ENCODE measurements at regions of chr4 and their contacts with region 1.

Region 1: DNA sequence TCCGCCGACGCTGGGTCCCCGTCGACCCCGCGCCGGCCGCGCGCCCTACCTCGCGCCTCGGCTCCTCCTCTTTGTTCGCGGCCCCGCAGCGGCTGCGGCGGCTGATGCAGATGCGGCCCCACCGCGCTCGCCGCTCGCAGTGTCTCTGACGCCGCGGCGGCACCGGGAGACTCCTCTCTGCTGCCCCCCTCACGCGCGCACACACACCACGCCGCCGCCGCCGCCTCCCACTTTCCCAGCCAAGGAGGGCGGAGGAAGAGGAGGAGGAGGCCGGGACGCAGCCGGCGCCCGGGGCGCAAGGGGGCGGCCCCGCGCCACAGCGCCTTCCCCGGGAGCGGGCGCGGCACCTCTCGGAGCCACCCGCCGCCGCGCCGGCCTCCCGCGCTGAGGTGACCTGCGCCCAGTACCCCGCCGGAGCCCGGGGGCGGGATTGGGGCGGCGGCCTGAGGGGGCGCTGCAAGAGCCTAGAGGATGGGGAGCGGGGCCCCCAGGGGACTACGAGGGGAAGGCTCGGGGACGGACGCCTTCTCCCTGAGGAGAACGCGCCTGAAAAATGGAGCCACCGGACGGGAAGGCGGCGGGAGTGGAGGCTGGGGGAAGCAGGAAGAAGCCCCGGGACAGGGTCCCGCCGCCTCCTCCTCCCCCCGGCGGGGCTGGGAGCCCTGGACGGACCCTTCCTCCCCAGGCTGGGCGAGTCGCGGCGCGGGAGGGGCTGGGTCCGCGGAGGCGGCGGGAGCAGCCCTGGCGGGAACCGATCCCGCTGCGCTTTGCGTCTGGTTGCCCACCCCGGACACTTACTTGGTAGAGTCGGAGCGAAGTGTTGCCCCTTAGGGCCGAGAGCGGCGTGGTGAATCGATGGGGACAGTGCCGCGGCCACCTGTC is at the start of gene SH3RF1:
- DNase-seq: peak; percentile 90
- H3K4me3 ChIP-seq: peak within 1 kb of the TSS; percentile 71 to 95 (median 75)
- H3K27ac ChIP-seq: peak within 1 kb of the TSS; percentile 89
- H3K4me1 ChIP-seq: peaks cover 26% of the 10 kb centered on the region
- H3K27me3 ChIP-seq: no peaks in the 10 kb centered on the region
- CTCF ChIP-seq: peak in 1 of 2 donors; percentile 11
- total RNA-seq, gene SH3RF1: 30.8 to 38.2 TPM

Region 2: DNA sequence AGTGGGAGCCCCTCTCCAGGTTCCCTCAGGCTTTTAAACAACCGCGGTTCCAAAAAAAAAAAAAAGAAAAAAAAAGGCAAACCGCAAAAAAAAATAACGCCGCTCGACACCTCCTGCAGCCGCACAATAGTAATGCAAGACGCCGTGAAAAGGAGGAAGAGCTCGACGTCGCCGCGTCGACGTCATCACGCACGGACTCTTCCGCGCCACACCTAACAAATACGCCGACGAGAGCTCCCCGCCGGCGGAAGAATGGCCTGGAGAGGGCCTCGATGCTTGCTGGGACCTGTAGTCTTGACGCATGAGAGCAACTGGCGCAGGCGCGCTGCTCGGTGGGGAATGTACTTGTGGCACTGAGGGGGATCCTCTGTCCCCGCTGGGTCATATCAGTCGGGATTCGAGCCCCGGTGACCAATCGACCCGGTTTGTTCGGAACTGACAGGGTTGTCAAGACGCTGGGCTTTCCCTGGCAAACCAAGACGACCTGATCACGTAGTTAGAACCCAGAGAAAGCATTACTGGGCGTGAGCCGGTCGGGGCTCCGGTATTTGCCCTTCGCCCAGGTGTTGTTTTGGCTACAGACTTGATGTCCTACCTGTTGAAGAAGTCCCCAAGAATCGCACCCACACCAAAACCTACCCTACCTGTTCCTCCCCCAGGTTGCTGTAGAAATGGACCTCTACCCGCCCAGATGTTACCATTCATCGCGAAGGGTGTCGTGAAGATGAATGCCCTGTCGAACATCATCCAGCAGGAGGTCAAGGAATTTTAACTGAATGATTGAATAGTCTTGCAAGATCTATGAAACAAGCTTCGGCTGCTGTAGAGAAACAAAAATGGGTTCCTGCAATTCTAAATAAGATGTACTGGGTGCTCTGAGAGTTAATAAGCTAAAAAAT is 260.7 kb before region 1 on chr4 and contains the start of gene CBR4:
- CTCF ChIA-PET with region 1: interaction called, 4 read pairs
- dilution Hi-C with region 1: no loop called
- in situ Hi-C with region 1: loop called in 1 of 2 experiments (anchors 25 kb)
- intact Hi-C with region 1: loop called (anchors 1 kb)
- DNase-seq: peak; percentile 98
- H3K4me3 ChIP-seq: peak within 1 kb of the TSS; percentile 67 to 79 (median 78)
- H3K27ac ChIP-seq: peak within 1 kb of the TSS; percentile 93
- H3K4me1 ChIP-seq: peaks cover 28% of the 10 kb centered on the region
- H3K27me3 ChIP-seq: no peaks in the 10 kb centered on the region
- CTCF ChIP-seq: peak; percentile 15 to 43
- total RNA-seq, gene CBR4: 19.0 to 24.4 TPM

Region 3: GRCh38 chr4:169115897-169116254 is 155.2 kb before region 1 on chr4:
- CTCF ChIA-PET with region 1: no interaction called
- dilution Hi-C with region 1: no loop called
- in situ Hi-C with region 1: no loop called
- intact Hi-C with region 1: loop called (anchors 1 kb)
- DNase-seq: peak; percentile 100
- H3K4me3 ChIP-seq: no peak overlapping the region
- H3K27ac ChIP-seq: peak overlapping the region; percentile 97
- H3K4me1 ChIP-seq: peaks cover 34% of the 10 kb centered on the region
- H3K27me3 ChIP-seq: no peaks in the 10 kb centered on the region
- CTCF ChIP-seq: peak; percentile 42 to 61

Region 4: GRCh38 chr4:169167958-169168858 is 102.8 kb before region 1 on chr4:
- CTCF ChIA-PET with region 1: no interaction called
- dilution Hi-C with region 1: no loop called
- in situ Hi-C with region 1: loop called in 1 of 2 experiments (anchors 25 kb)
- intact Hi-C with region 1: no loop called
- DNase-seq: no peak
- H3K4me3 ChIP-seq: no peak overlapping the region
- H3K27ac ChIP-seq: no peak overlapping the region
- H3K4me1 ChIP-seq: peaks cover 2% of the 10 kb centered on the region
- H3K27me3 ChIP-seq: no peaks in the 10 kb centered on the region
- CTCF ChIP-seq: no peak

Region 5: GRCh38 chr4:169225058-169225751 is 45.8 kb before region 1 on chr4:
- CTCF ChIA-PET with region 1: no interaction called
- dilution Hi-C with region 1: no loop called
- in situ Hi-C with region 1: no loop called
- intact Hi-C with region 1: loop called (anchors 2 kb)
- DNase-seq: peak; percentile 91
- H3K4me3 ChIP-seq: no peak overlapping the region
- H3K27ac ChIP-seq: peak overlapping the region; percentile 88
- H3K4me1 ChIP-seq: peaks cover 56% of the 10 kb centered on the region
- H3K27me3 ChIP-seq: no peaks in the 10 kb centered on the region
- CTCF ChIP-seq: no peak

Region 6: GRCh38 chr4:169335331-169335730 is 64.3 kb after region 1 on chr4:
- CTCF ChIA-PET with region 1: no interaction called
- dilution Hi-C with region 1: no loop called
- in situ Hi-C with region 1: no loop called
- intact Hi-C with region 1: loop called (anchors 2 kb)
- DNase-seq: peak; percentile 89
- H3K4me3 ChIP-seq: no peak overlapping the region
- H3K27ac ChIP-seq: peak overlapping the region; percentile 71
- H3K4me1 ChIP-seq: peaks cover 38% of the 10 kb centered on the region
- H3K27me3 ChIP-seq: no peaks in the 10 kb centered on the region
- CTCF ChIP-seq: no peak

Region 7: GRCh38 chr4:169485791-169486742 is 215.0 kb after region 1 on chr4:
- CTCF ChIA-PET with region 1: no interaction called
- dilution Hi-C with region 1: no loop called
- in situ Hi-C with region 1: loop called in 1 of 2 experiments (anchors 10 kb)
- intact Hi-C with region 1: loop called (anchors 1 kb)
- DNase-seq: peak; percentile 50
- H3K4me3 ChIP-seq: no peak overlapping the region
- H3K27ac ChIP-seq: peak overlapping the region; percentile 15
- H3K4me1 ChIP-seq: peaks cover 4% of the 10 kb centered on the region
- H3K27me3 ChIP-seq: no peaks in the 10 kb centered on the region
- CTCF ChIP-seq: peak; percentile 43 to 54

Region 8: DNA sequence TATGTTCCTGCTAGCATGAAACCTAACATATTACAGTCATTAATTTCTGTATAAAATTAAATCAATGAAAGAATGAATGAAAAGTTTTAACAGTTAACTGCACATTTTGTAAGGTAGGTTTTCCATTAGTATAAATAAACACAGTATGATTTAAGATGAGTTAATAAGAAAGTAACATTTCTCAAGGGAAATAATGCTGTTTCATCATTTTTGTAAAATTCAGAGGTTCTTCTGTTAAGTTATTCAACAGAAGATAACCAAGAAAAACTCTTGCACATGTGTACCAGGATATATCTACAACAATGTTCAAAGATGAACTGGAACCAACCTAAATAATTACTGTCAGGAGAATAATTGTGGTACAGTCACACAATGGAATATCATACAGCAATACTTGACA is 252.7 kb after region 1 on chr4:
- CTCF ChIA-PET with region 1: no interaction called
- dilution Hi-C with region 1: no loop called
- in situ Hi-C with region 1: no loop called
- intact Hi-C with region 1: no loop called
- DNase-seq: no peak
- H3K4me3 ChIP-seq: no peak overlapping the region
- H3K27ac ChIP-seq: no peak overlapping the region
- H3K4me1 ChIP-seq: no peaks in the 10 kb centered on the region
- H3K27me3 ChIP-seq: no peaks in the 10 kb centered on the region
- CTCF ChIP-seq: no peak

Measured in mammary epithelial cell (primary cell).